Colonic mucosa (tissue), 4 donors: ENCODE measurements at regions of chr6 and their contacts with region 1.

Region 1: DNA sequence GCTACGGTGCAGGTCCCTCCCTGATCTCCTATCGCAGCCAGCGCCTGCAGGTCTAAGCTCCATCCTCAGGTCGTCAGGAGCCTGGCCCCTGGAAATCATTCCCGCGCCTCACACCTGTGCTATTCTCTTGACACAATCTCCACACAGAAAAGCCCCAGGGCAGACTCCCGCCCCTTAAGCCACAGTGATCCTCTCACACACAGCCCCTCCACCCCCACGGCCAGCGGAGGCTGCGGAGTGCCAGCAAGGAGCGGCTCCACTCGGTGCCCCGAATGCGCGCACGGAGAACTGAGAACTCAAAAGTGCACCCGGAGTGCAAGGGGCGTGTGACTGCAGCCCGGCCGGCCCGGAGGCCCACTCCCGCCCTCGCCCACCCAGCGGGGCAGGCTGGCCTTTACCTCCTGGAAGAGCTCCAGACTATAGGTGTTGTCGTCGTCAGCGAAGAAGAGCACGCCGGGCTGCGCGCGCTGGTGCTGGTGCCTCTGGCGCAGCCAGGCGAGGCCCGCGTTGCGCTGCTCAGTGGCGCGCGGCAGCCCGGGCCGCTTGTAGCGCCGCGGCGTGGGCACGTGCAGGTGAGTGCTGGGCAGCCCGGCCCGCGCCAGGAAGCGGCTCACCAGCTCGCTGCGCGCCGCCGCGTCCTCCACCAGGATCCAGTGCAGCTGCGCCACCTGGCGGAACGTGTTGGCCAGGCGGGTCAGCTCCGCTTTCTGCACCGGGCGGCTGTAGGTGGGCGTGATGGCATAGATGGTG is 1.2 kb downstream of the B3GAT2 start:
- DNase-seq: peak; percentile 89
- H3K4me3 ChIP-seq: peak overlapping the region; percentile 37
- H3K27ac ChIP-seq: no peak overlapping the region
- H3K4me1 ChIP-seq: peaks cover 7% of the 10 kb centered on the region
- H3K27me3 ChIP-seq: peaks cover 38% of the 10 kb centered on the region
- CTCF ChIP-seq: peak; percentile 74

Region 2: DNA sequence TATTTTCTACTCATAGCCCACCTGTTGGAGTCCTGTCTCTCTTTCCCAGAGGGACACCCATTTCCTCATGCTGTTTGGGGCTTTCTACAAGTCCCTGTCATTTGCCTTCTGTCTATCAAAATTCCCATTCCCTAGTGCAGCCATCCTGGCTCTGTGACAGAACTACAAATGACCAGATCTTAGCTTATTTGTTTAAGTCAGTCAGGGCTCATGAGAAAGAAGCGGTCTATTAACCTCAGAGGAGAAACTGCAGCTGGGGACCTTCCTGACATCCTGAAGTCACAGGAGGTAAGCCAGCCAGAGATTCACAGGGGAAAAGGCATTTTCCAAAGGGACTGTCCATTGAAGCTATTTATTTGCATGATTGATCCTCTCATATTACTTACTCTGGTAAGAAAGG is 651.0 kb before region 1 on chr6:
- intact Hi-C with region 1: loop called (anchors 5 kb)
- DNase-seq: no peak
- H3K4me3 ChIP-seq: no peak overlapping the region
- H3K27ac ChIP-seq: no peak overlapping the region
- H3K4me1 ChIP-seq: no peaks in the 10 kb centered on the region
- H3K27me3 ChIP-seq: no peaks in the 10 kb centered on the region
- CTCF ChIP-seq: no peak

Region 3: DNA sequence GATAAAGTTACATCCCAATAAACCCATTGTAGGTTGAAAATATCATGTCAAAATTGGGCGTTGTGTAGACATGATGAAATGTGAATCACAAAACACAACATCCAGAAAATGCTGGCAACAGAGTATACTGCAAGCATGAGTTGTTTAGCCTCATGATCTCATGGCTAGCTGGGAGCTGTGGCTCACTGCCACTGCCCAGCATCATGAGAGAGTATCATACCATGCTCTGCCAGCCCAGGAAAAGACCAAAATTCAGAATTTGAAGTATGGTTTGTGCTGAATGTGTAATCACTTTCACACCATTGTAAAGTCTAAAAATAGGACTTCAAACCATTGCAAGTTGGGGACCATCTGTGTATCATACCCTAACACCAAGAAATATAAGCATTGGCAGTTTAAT is 333.2 kb before region 1 on chr6:
- intact Hi-C with region 1: no loop called
- DNase-seq: no peak
- H3K4me3 ChIP-seq: no peak overlapping the region
- H3K27ac ChIP-seq: no peak overlapping the region
- H3K4me1 ChIP-seq: no peaks in the 10 kb centered on the region
- H3K27me3 ChIP-seq: no peaks in the 10 kb centered on the region
- CTCF ChIP-seq: no peak

Region 4: GRCh38 chr6:70706491-70707123 is 249.0 kb before region 1 on chr6:
- intact Hi-C with region 1: loop called (anchors 10 kb)
- DNase-seq: no peak
- H3K4me3 ChIP-seq: no peak overlapping the region
- H3K27ac ChIP-seq: no peak overlapping the region
- H3K4me1 ChIP-seq: peaks cover 3% of the 10 kb centered on the region
- H3K27me3 ChIP-seq: no peaks in the 10 kb centered on the region
- CTCF ChIP-seq: peak; percentile 54

Region 5: GRCh38 chr6:70738028-70738427 is 217.6 kb before region 1 on chr6:
- intact Hi-C with region 1: no loop called
- DNase-seq: no peak
- H3K4me3 ChIP-seq: no peak overlapping the region
- H3K27ac ChIP-seq: no peak overlapping the region
- H3K4me1 ChIP-seq: no peaks in the 10 kb centered on the region
- H3K27me3 ChIP-seq: no peaks in the 10 kb centered on the region
- CTCF ChIP-seq: no peak